Mammary epithelial cell (primary cell): ENCODE measurements at regions of chr7 and their contacts with region 1.

Region 1: GRCh38 chr7:13042612-13043240 is 355.3 kb downstream of the ARL4A start:
- DNase-seq: peak; percentile 52
- H3K4me3 ChIP-seq: no peak overlapping the region
- H3K27ac ChIP-seq: no peak overlapping the region
- H3K4me1 ChIP-seq: peaks cover 13% of the 10 kb centered on the region
- H3K27me3 ChIP-seq: no peaks in the 10 kb centered on the region
- CTCF ChIP-seq: no peak

Region 2: GRCh38 chr7:12923971-12924370 is 118.8 kb before region 1 on chr7:
- CTCF ChIA-PET with region 1: no interaction called
- dilution Hi-C with region 1: no loop called
- in situ Hi-C with region 1: no loop called
- intact Hi-C with region 1: loop called (anchors 1 kb)
- DNase-seq: peak; percentile 81
- H3K4me3 ChIP-seq: no peak overlapping the region
- H3K27ac ChIP-seq: peak overlapping the region; percentile 65
- H3K4me1 ChIP-seq: peaks cover 19% of the 10 kb centered on the region
- H3K27me3 ChIP-seq: no peaks in the 10 kb centered on the region
- CTCF ChIP-seq: no peak

Region 3: GRCh38 chr7:13262929-13263530 is 220.3 kb after region 1 on chr7:
- CTCF ChIA-PET with region 1: no interaction called
- dilution Hi-C with region 1: no loop called
- in situ Hi-C with region 1: no loop called
- intact Hi-C with region 1: no loop called
- DNase-seq: peak; percentile 10
- H3K4me3 ChIP-seq: no peak overlapping the region
- H3K27ac ChIP-seq: no peak overlapping the region
- H3K4me1 ChIP-seq: no peaks in the 10 kb centered on the region
- H3K27me3 ChIP-seq: no peaks in the 10 kb centered on the region
- CTCF ChIP-seq: peak; percentile 39 to 61